ENCODE measurements at regions of chr16 and their contacts with region 1.

Region 1: GRCh38 chr16:85369741-85370528 is 243.2 kb upstream of the GSE1 start:
- DNase-seq: peak; percentile 65 to 87 (median 85)
- ATAC-seq: peak; percentile 50 to 52
- H3K4me3 ChIP-seq: no peak overlapping the region
- H3K27ac ChIP-seq: peak overlapping the region; percentile 10
- H3K4me1 ChIP-seq: no peaks in the 10 kb centered on the region
- H3K27me3 ChIP-seq: no peaks in the 10 kb centered on the region

Region 2: GRCh38 chr16:85321509-85322271 is 48.2 kb before region 1 on chr16:
- intact Hi-C with region 1: loop called in 1 of 4 experiments (anchors 5 kb)
- DNase-seq: peak; percentile 99
- ATAC-seq: peak; percentile 98
- H3K4me3 ChIP-seq: no peak overlapping the region
- H3K27ac ChIP-seq: peak overlapping the region; percentile 43
- H3K4me1 ChIP-seq: peaks cover 12% of the 10 kb centered on the region
- H3K27me3 ChIP-seq: no peaks in the 10 kb centered on the region

Measured in right cardiac atrium (tissue), 5 donors.